ENCODE measurements at regions of chr9 and their contacts with region 1.

Region 1: GRCh38 chr9:12775679-12776512 is 1.1 kb downstream of the LURAP1L start:
- DNase-seq: no peak
- ATAC-seq: peak; percentile 90
- H3K4me3 ChIP-seq: peak overlapping the region; percentile 57
- H3K27ac ChIP-seq: no peak overlapping the region
- H3K4me1 ChIP-seq: no peaks in the 10 kb centered on the region
- H3K27me3 ChIP-seq: peaks cover 0 to 4% of the 10 kb centered on the region in 2 experiments; a peak in 3 of 4 replicates
- CTCF ChIP-seq: peak in 1 of 3 experiments; percentile 53; a peak in 3 of 6 replicates
- EP300 ChIP-seq: no peak
- POLR2A ChIP-seq: no peak
- RAD21 ChIP-seq: peak; percentile 27; the same call in 1 of the 2 replicates

Region 2: GRCh38 chr9:12544700-12545099 is 231.2 kb before region 1 on chr9:
- CTCF ChIA-PET with region 1: no interaction called
- POLR2A ChIA-PET with region 1: no interaction called
- RAD21 ChIA-PET with region 1: no interaction called
- SMC1A ChIA-PET with region 1: no interaction called
- in situ Hi-C with region 1: no loop called
- intact Hi-C with region 1: no loop called
- DNase-seq: no peak
- ATAC-seq: no peak
- H3K4me3 ChIP-seq: no peak overlapping the region
- H3K27ac ChIP-seq: no peak overlapping the region
- H3K4me1 ChIP-seq: no peaks in the 10 kb centered on the region
- H3K27me3 ChIP-seq: no peaks in the 10 kb centered on the region
- CTCF ChIP-seq: no peak
- EP300 ChIP-seq: no peak
- POLR2A ChIP-seq: no peak
- RAD21 ChIP-seq: no peak

Region 3: DNA sequence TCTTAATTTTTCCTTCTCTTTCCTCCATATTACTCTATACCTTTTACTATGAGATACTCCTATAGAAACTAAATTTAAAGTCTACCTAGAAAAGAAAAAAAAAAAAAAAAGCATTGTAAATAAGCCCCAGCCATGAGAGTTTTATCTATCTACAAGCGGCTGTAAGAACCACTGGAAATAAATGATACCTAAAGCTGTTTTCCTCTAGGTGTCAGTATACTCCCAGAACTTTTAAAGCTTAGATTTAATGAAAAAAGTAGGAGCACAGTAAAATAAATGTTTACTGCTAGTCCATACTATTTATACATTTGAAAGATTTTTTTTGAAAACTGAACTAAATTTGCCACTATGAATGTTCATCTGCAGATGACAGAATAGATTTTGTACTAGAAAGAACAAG is 56.5 kb before region 1 on chr9:
- CTCF ChIA-PET with region 1: interaction called, 36 read pairs
- POLR2A ChIA-PET with region 1: no interaction called
- RAD21 ChIA-PET with region 1: interaction called, 13 read pairs
- SMC1A ChIA-PET with region 1: interaction called, 27 read pairs
- in situ Hi-C with region 1: no loop called
- intact Hi-C with region 1: loop called (anchors 5 kb)
- DNase-seq: no peak
- ATAC-seq: 0 out of 3 replicates have a peak, but pooled peaks have one; percentile 35
- H3K4me3 ChIP-seq: no peak overlapping the region
- H3K27ac ChIP-seq: no peak overlapping the region
- H3K4me1 ChIP-seq: no peaks in the 10 kb centered on the region
- H3K27me3 ChIP-seq: no peaks in the 10 kb centered on the region
- CTCF ChIP-seq: peak in 1 of 3 experiments; percentile 45; a peak in 1 of 6 replicates
- EP300 ChIP-seq: no peak
- POLR2A ChIP-seq: no peak
- RAD21 ChIP-seq: peak; percentile 49

Region 4: DNA sequence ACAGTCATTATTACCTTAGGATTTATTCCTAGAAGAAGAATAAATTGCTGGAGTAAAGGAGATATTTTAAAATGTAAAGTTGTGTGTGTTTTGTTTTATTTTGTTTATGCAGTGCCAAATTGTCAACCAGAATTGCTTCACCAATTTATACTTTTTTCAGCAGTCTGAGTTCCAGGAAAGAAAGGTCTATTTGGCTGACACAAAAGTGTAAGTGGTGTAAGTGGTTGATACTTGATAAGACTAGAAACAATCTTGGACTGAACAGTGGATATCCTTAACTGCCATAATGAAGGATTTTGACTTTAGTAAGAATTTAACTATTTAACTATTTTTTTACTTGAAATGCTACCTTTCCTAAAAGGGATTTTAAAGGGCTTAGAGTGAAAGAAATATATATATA is 45.0 kb before region 1 on chr9:
- CTCF ChIA-PET with region 1: interaction called, 36 read pairs
- POLR2A ChIA-PET with region 1: interaction called, 8 read pairs
- RAD21 ChIA-PET with region 1: interaction called, 11 read pairs
- SMC1A ChIA-PET with region 1: interaction called, 27 read pairs
- in situ Hi-C with region 1: no loop called
- intact Hi-C with region 1: loop called (anchors 5 kb)
- DNase-seq: no peak
- ATAC-seq: no peak
- H3K4me3 ChIP-seq: no peak overlapping the region
- H3K27ac ChIP-seq: no peak overlapping the region
- H3K4me1 ChIP-seq: no peaks in the 10 kb centered on the region
- H3K27me3 ChIP-seq: no peaks in the 10 kb centered on the region
- CTCF ChIP-seq: no peak
- EP300 ChIP-seq: no peak
- POLR2A ChIP-seq: no peak
- RAD21 ChIP-seq: no peak

Region 5: GRCh38 chr9:12739014-12739652 is 36.8 kb before region 1 on chr9:
- CTCF ChIA-PET with region 1: interaction called, 11 read pairs
- POLR2A ChIA-PET with region 1: interaction called, 8 read pairs
- RAD21 ChIA-PET with region 1: interaction called, 10 read pairs
- SMC1A ChIA-PET with region 1: interaction called, 9 read pairs
- in situ Hi-C with region 1: no loop called
- intact Hi-C with region 1: loop called (anchors 5 kb)
- DNase-seq: no peak
- ATAC-seq: no peak
- H3K4me3 ChIP-seq: no peak overlapping the region
- H3K27ac ChIP-seq: no peak overlapping the region
- H3K4me1 ChIP-seq: no peaks in the 10 kb centered on the region
- H3K27me3 ChIP-seq: no peaks in the 10 kb centered on the region
- CTCF ChIP-seq: no peak
- EP300 ChIP-seq: no peak
- POLR2A ChIP-seq: no peak
- RAD21 ChIP-seq: no peak

Region 6: DNA sequence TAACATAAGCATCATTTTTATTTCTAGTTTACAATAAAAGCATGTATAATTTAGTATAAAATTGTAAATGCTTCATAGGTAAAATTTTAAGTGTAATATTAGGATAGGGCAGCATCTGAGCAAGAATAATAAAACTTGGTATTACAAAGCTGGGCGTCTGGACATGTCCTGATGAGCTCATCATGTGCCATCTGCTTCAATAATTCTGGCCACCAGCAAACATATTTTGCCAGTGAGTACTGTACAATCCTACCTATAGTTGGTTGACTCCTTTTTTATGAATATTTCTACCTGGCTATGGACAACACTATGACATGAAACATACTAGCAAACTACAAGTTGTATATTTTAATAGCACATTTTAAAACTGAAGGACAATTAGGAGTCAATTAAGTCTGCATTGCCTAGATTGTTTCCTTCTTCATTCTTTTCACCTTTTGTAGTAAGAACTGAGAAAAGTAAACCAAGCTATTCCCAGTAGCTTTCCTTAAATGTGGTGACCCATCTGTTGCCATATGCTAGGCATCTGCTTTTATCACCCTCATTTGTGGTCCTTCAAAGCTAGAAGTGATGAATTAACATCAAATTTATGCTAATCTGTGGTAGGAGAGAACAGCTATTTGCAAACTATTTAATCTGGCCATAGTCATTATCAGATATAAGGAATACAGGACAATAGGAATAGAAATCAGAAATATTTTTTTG is 22.3 kb after region 1 on chr9:
- CTCF ChIA-PET with region 1: interaction called, 11 read pairs
- POLR2A ChIA-PET with region 1: no interaction called
- RAD21 ChIA-PET with region 1: no interaction called
- SMC1A ChIA-PET with region 1: interaction called, 13 read pairs
- in situ Hi-C with region 1: no loop called
- intact Hi-C with region 1: no loop called
- DNase-seq: no peak
- ATAC-seq: 0 out of 3 replicates have a peak, but pooled peaks have one; percentile 21
- H3K4me3 ChIP-seq: no peak overlapping the region
- H3K27ac ChIP-seq: no peak overlapping the region
- H3K4me1 ChIP-seq: no peaks in the 10 kb centered on the region
- H3K27me3 ChIP-seq: no peaks in the 10 kb centered on the region
- CTCF ChIP-seq: no peak
- EP300 ChIP-seq: no peak
- POLR2A ChIP-seq: no peak
- RAD21 ChIP-seq: no peak

Region 7: DNA sequence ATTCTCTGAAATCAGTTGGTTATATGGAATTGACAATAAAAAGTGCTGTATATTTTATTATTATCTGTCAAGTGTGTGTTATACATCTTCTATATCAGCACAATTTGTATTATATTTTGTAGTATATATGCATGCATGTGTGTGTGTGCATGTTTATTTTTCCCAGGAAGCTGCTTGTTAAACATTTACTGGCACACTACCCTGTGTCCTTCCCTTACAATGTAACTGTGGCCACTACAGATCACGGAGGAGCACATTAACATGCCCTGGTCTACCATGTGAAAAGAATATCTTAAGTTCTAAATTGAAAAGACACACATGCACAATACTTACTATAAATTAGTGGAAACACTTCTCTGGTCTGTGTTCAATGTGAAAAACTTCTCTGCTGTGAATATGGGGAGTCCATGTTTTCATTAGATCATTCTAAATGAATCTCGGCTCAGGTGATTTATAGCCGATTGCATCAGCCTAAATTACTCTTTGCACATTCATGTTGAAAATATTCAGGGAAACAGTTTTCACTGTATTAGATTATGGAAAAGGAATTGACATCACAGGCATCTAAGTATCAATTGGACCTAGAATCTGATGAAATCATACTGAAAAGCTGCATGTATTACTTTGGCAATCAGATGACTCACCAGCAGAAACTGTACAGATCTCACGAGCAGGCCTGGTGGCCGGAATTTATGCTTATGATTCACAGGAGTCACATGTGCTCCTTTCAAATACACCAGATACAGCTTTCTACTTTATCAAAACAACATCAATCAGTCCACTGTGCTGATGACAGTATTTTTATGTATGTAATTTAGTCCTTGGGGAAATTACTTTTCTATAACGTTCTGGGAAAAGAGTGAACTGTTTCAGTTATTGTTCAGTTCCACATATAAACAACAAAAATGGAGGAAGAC is 38.3 kb after region 1 on chr9:
- CTCF ChIA-PET with region 1: interaction called, 27 read pairs
- POLR2A ChIA-PET with region 1: interaction called, 9 read pairs
- RAD21 ChIA-PET with region 1: interaction called, 16 read pairs
- SMC1A ChIA-PET with region 1: interaction called, 18 read pairs
- in situ Hi-C with region 1: no loop called
- intact Hi-C with region 1: loop called (anchors 1 kb)
- DNase-seq: no peak
- ATAC-seq: peak; percentile 85
- H3K4me3 ChIP-seq: no peak overlapping the region
- H3K27ac ChIP-seq: no peak overlapping the region
- H3K4me1 ChIP-seq: no peaks in the 10 kb centered on the region
- H3K27me3 ChIP-seq: no peaks in the 10 kb centered on the region
- CTCF ChIP-seq: no peak
- EP300 ChIP-seq: no peak
- POLR2A ChIP-seq: no peak
- RAD21 ChIP-seq: no peak

Region 8: GRCh38 chr9:12819436-12820185 is 43.7 kb after region 1 on chr9:
- CTCF ChIA-PET with region 1: interaction called, 27 read pairs
- POLR2A ChIA-PET with region 1: interaction called, 9 read pairs
- RAD21 ChIA-PET with region 1: interaction called, 16 read pairs
- SMC1A ChIA-PET with region 1: interaction called, 18 read pairs
- in situ Hi-C with region 1: no loop called
- intact Hi-C with region 1: loop called (anchors 1 kb)
- DNase-seq: no peak
- ATAC-seq: peak; percentile 88
- H3K4me3 ChIP-seq: no peak overlapping the region
- H3K27ac ChIP-seq: no peak overlapping the region
- H3K4me1 ChIP-seq: no peaks in the 10 kb centered on the region
- H3K27me3 ChIP-seq: no peaks in the 10 kb centered on the region
- CTCF ChIP-seq: peak; percentile 45 to 68 (median 55)
- EP300 ChIP-seq: no peak
- POLR2A ChIP-seq: no peak
- RAD21 ChIP-seq: peak; percentile 47; the same call in 1 of the 2 replicates